Activated CD4-positive, alpha-beta memory T cell treated with anti-CD3 and anti-CD28 coated beads, Interleukin-2, amount 10 ng/mL, durations not matched to agents 7 days and 5 days (primary cell): ENCODE measurements at regions of chr1 and their contacts with region 1.

Region 1: GRCh38 chr1:150072959-150073358 is 5.4 kb downstream of the VPS45 start:
- DNase-seq: no peak
- H3K4me3 Mint-ChIP-seq: no peak overlapping the region
- H3K27ac Mint-ChIP-seq: peak overlapping the region; percentile 24
- H3K4me1 Mint-ChIP-seq: peaks cover 47% of the 10 kb centered on the region
- H3K27me3 Mint-ChIP-seq: no peaks in the 10 kb centered on the region

Region 2: GRCh38 chr1:150021191-150021694 is 51.7 kb before region 1 on chr1:
- CTCF ChIA-PET with region 1: no interaction called
- POLR2A ChIA-PET with region 1: no interaction called
- DNase-seq: no peak
- H3K4me3 Mint-ChIP-seq: no peak overlapping the region
- H3K27ac Mint-ChIP-seq: no peak overlapping the region
- H3K4me1 Mint-ChIP-seq: no peaks in the 10 kb centered on the region
- H3K27me3 Mint-ChIP-seq: peaks cover 11% of the 10 kb centered on the region

Region 3: DNA sequence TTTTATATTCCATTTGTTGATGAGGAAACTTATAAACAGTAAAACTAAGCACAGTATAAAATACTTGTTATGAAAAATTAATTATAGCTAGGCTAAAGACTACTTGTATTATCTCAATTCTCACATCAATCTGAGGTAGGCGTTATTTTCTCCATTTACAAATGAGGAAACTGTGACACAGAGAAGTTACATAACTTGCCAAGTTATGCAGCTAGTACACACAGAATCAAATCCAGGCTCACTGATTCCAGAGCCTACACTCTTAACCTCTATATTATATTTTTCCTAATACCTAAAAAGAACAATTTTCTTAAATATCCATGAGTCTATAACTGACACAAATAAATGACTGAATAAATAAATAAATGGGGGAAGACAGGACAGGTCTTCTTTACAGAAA is 16.6 kb before region 1 on chr1:
- CTCF ChIA-PET with region 1: no interaction called
- POLR2A ChIA-PET with region 1: no interaction called
- DNase-seq: no peak
- H3K4me3 Mint-ChIP-seq: no peak overlapping the region
- H3K27ac Mint-ChIP-seq: no peak overlapping the region
- H3K4me1 Mint-ChIP-seq: no peaks in the 10 kb centered on the region
- H3K27me3 Mint-ChIP-seq: peaks cover 11% of the 10 kb centered on the region

Region 4: DNA sequence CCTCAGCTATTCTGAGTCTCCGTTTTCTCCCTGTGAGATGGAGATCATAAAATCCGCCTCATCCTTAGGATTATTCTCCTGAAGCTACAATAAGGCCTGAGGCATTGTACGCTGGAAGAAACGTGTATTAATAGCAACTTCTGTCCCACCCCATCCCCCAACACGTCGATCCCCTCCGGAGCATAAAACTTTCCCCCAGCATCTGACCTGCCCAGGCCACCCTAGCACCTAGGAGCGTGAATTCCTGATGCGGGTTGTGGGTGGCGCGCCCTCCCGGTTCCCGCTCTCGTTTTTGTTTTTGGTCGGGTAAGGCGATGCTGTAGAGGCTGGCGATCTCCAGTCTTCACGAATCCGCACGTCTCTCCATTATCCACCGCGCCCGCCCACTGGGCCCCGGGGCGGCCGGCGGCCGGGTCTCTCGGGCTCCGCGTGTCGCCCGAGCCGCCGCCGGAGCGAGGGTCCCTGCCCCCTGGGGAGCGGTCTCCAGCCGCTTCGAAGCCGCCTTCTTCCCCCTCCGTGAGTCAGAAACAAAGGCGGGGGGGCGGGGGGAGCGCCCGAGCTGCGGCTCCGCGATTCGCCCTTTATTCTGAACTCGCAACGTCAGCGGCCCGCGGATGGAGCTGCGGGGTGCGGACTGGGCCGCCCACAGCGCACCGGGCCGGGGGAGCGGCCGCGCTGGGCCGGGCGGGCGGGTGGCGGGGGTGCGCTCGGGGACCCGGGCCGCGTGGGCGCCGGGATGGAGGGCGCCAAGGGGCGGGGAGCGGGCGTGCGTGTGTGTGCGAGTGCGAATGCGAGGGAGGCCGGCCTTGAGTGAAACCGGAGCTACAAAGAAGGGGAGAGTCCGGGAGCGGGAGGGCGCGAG is 76.5 kb after region 1 on chr1 and contains the start of gene PLEKHO1:
- CTCF ChIA-PET with region 1: interaction called, 11 read pairs
- POLR2A ChIA-PET with region 1: interaction called, 34 read pairs
- DNase-seq: peak; percentile 87
- H3K4me3 Mint-ChIP-seq: peak within 1 kb of the TSS; percentile 86
- H3K27ac Mint-ChIP-seq: peak within 1 kb of the TSS; percentile 93
- H3K4me1 Mint-ChIP-seq: peaks cover 66% of the 10 kb centered on the region
- H3K27me3 Mint-ChIP-seq: peaks cover 1% of the 10 kb centered on the region
- total RNA-seq, gene PLEKHO1: 89.8 to 92.9 TPM